ENCODE measurements at regions of chr17 and their contacts with region 1.

Region 1: GRCh38 chr17:7296189-7296902 is 1.9 kb upstream of the YBX2 start:
- DNase-seq: no peak
- ATAC-seq: peak; percentile 89
- H3K4me3 ChIP-seq: peak overlapping the region; percentile 11; the same call in 1 of the 2 replicates
- H3K27ac ChIP-seq: no peak overlapping the region
- H3K4me1 ChIP-seq: peaks cover 3% of the 10 kb centered on the region
- H3K27me3 ChIP-seq: peaks cover 3 to 5% of the 10 kb centered on the region in 2 experiments
- CTCF ChIP-seq: peak; percentile 84 to 93 (median 86); a peak in 5 of 6 replicates
- EP300 ChIP-seq: no peak
- POLR2A ChIP-seq: no peak
- RAD21 ChIP-seq: peak; percentile 74

Region 2: GRCh38 chr17:7214300-7215135 is 81.8 kb before region 1 on chr17:
- CTCF ChIA-PET with region 1: interaction called, 60 read pairs
- POLR2A ChIA-PET with region 1: no interaction called
- RAD21 ChIA-PET with region 1: interaction called, 44 read pairs
- SMC1A ChIA-PET with region 1: no interaction called
- in situ Hi-C with region 1: no loop called
- intact Hi-C with region 1: loop called (anchors 5 kb)
- DNase-seq: peak; percentile 89
- ATAC-seq: peak; percentile 91
- H3K4me3 ChIP-seq: peak overlapping the region; percentile 72
- H3K27ac ChIP-seq: no peak overlapping the region; the same call in 1 of the 2 replicates
- H3K4me1 ChIP-seq: peaks cover 18% of the 10 kb centered on the region
- H3K27me3 ChIP-seq: no peaks in the 10 kb centered on the region
- CTCF ChIP-seq: peak; percentile 56 to 59 (median 56); a peak in 5 of 6 replicates
- EP300 ChIP-seq: no peak
- POLR2A ChIP-seq: no peak
- RAD21 ChIP-seq: no peak

Region 3: GRCh38 chr17:7252176-7253043 is 43.9 kb before region 1 on chr17 and contains the start of gene ELP5:
- CTCF ChIA-PET with region 1: interaction called, 10 read pairs
- POLR2A ChIA-PET with region 1: interaction called, 4 read pairs
- RAD21 ChIA-PET with region 1: no interaction called
- SMC1A ChIA-PET with region 1: no interaction called
- in situ Hi-C with region 1: no loop called
- intact Hi-C with region 1: no loop called
- DNase-seq: peak; percentile 82
- ATAC-seq: peak; percentile 76
- H3K4me3 ChIP-seq: peak within 1 kb of the TSS; percentile 90
- H3K27ac ChIP-seq: peak within 1 kb of the TSS; percentile 99
- H3K4me1 ChIP-seq: peaks cover 10% of the 10 kb centered on the region
- H3K27me3 ChIP-seq: no peaks in the 10 kb centered on the region
- CTCF ChIP-seq: peak; percentile 11 to 42 (median 37); a peak in 3 of 6 replicates
- EP300 ChIP-seq: no peak
- POLR2A ChIP-seq: peak; percentile 98
- RAD21 ChIP-seq: no peak
- polyA plus RNA-seq, gene ELP5: 81.8 to 94.7 TPM

Region 4: GRCh38 chr17:7280519-7281429 is 15.6 kb before region 1 on chr17:
- CTCF ChIA-PET with region 1: interaction called, 102 read pairs
- POLR2A ChIA-PET with region 1: interaction called, 4 read pairs
- RAD21 ChIA-PET with region 1: interaction called, 11 read pairs
- SMC1A ChIA-PET with region 1: interaction called, 17 read pairs
- in situ Hi-C with region 1: no loop called
- intact Hi-C with region 1: loop called (anchors 1 kb)
- DNase-seq: peak; percentile 40
- ATAC-seq: peak; percentile 90
- H3K4me3 ChIP-seq: peak overlapping the region; percentile 56
- H3K27ac ChIP-seq: no peak overlapping the region
- H3K4me1 ChIP-seq: peaks cover 8% of the 10 kb centered on the region
- H3K27me3 ChIP-seq: no peaks in the 10 kb centered on the region; a peak in 1 of 4 replicates
- CTCF ChIP-seq: peak; percentile 96 to 98 (median 98); a peak in 5 of 6 replicates
- EP300 ChIP-seq: no peak
- POLR2A ChIP-seq: 0 out of 2 replicates have a peak, but pooled peaks have one; percentile 28
- RAD21 ChIP-seq: peak; percentile 90

Region 5: DNA sequence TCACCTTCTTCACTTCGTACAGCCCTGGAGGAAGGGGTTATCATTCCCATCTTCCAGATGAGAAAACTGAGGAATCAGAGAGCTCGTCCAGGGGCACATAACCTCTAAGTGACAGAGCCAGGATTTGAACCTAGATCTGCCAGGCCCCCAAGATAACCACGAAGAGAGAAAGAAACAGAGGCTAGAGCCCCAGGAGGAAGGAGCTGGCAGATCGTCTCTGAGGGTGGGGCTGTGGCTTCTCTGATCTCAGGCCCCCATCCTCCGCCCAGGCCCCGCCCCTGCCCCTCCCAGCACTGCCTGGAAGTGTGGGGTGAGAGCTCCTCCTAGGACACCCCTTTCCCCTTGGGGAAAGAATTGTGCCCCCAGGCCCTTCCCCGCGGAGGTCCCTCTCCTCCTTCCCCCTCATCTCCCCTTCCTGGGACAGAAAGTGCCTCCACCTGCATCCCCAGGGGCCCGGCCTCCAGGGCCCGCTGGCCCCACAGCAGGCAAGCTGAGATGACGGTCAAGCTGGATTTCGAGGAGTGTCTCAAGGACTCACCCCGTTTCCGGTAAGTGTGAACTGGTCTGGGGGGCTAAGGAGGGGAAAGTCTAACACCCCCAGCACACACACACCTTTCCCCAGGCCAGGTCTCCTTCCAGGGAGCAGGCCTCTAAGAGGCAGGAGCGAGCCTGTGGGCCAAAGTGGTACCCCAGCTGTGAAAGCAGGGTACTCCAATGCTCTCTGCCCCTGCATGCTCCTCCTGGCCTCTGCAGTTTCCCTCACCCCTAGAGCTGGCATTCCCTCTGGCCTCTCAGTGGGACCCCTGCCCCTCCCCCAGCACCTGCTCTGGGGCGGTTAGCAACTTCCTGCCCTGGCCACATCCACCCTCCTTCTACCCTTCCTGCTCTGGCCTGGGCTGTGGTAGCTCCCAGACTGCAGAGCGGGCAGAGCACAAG is 40.2 kb after region 1 on chr17 and contains the start of gene ACAP1:
- CTCF ChIA-PET with region 1: interaction called, 18 read pairs
- POLR2A ChIA-PET with region 1: interaction called, 3 read pairs
- RAD21 ChIA-PET with region 1: interaction called, 8 read pairs
- SMC1A ChIA-PET with region 1: no interaction called
- in situ Hi-C with region 1: no loop called
- intact Hi-C with region 1: no loop called
- DNase-seq: no peak
- ATAC-seq: peak; percentile 93
- H3K4me3 ChIP-seq: peak within 1 kb of the TSS; percentile 96
- H3K27ac ChIP-seq: peak within 1 kb of the TSS; percentile 99
- H3K4me1 ChIP-seq: peaks cover 27% of the 10 kb centered on the region
- H3K27me3 ChIP-seq: no peaks in the 10 kb centered on the region
- CTCF ChIP-seq: 0 out of 6 replicates have a peak, but pooled peaks of 1 of the 3 experiments have one; percentile 11
- EP300 ChIP-seq: peak in 1 of 2 experiments; percentile 13; a peak in 1 of 4 replicates
- POLR2A ChIP-seq: peak; percentile 45
- RAD21 ChIP-seq: no peak
- polyA plus RNA-seq, gene ACAP1: 5.7 to 25.2 TPM

Region 6: DNA sequence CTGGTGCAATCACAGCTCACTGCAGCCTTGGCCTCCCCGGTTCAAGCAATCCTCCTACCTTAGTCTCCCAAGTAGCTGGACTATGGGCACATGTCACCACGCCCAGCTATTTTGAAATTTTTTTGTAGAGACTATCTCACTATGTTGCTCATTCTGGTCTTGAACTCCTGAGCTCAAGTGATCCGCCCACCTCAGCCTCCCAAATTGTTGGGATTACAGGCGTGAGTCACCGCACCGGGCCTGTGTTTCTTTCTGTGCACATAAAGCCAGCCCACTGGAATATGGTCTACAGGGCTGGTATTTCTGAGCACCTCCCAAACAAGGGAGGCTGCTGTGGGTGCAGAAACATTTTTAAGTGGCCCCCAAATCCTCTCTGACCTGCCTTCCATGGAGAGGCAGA is 67.0 kb after region 1 on chr17:
- CTCF ChIA-PET with region 1: no interaction called
- POLR2A ChIA-PET with region 1: no interaction called
- RAD21 ChIA-PET with region 1: no interaction called
- SMC1A ChIA-PET with region 1: no interaction called
- in situ Hi-C with region 1: no loop called
- intact Hi-C with region 1: no loop called
- DNase-seq: no peak
- ATAC-seq: no peak
- H3K4me3 ChIP-seq: no peak overlapping the region
- H3K27ac ChIP-seq: no peak overlapping the region
- H3K4me1 ChIP-seq: no peaks in the 10 kb centered on the region
- H3K27me3 ChIP-seq: no peaks in the 10 kb centered on the region
- CTCF ChIP-seq: no peak
- EP300 ChIP-seq: no peak
- POLR2A ChIP-seq: no peak
- RAD21 ChIP-seq: no peak

Measured in GM12878 (cell line).